Psoas muscle (tissue), 8 donors: ENCODE measurements at regions of chr11 and their contacts with region 1.

Region 1: GRCh38 chr11:44095506-44096394 is at the start of gene EXT2:
- DNase-seq: peak; percentile 89 to 95
- ATAC-seq: peak; percentile 98 to 99 (median 98)
- H3K4me3 ChIP-seq: peak within 1 kb of the TSS; percentile 95
- H3K27ac ChIP-seq: peak within 1 kb of the TSS; percentile 85
- H3K4me1 ChIP-seq: peaks cover 21% of the 10 kb centered on the region
- H3K27me3 ChIP-seq: no peaks in the 10 kb centered on the region
- CTCF ChIP-seq: peak; percentile 88
- total RNA-seq, gene EXT2: 21.4 to 23.5 (median 21.6) TPM

Region 2: GRCh38 chr11:44538375-44539054 is 442.8 kb after region 1 on chr11:
- intact Hi-C with region 1: loop called (anchors 1 to 2 kb)
- DNase-seq: peak; percentile 70 to 87
- ATAC-seq: peak; percentile 95 to 99 (median 96)
- H3K4me3 ChIP-seq: no peak overlapping the region
- H3K27ac ChIP-seq: no peak overlapping the region
- H3K4me1 ChIP-seq: no peaks in the 10 kb centered on the region
- H3K27me3 ChIP-seq: peaks cover 0 to 7% (median 0%) of the 10 kb centered on the region in 3 donors
- CTCF ChIP-seq: peak; percentile 96

Region 3: DNA sequence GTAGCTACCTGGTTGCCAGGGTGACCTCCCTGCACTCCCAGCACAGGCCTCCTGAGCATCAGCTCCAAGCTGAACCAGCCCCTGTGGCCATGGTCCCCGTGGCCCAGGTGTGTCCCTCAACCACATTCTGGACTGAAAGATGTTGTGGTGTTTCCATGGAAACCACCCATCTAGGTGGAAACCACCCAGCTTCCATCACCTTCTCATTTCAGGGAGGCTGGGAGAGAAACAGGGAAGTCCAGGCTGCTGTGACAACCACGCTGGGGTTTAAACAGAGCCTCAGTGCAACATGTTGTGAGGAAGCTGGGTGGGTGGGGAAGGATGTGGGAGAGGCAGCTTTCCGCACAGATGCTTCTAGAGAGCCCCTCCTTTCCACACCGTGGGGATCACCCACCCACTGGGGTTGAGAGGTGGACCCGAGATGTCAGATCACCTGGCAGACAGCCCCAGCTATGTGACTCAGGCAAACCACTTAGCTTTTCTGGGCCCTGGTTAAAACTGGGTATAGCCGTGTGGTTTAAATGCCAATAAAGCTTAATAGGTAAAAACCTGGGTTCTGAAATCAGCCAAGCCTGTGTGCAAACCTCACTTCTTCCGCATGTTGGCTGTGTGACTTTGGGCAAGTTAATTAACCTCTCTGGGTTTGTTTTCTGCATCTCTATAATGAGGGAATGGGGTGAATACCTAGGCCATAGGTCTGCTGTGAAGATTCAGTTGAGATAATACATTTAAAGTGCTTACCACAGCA is 516.1 kb after region 1 on chr11:
- intact Hi-C with region 1: loop called (anchors 10 kb)
- DNase-seq: no peak
- ATAC-seq: no peak
- H3K4me3 ChIP-seq: no peak overlapping the region
- H3K27ac ChIP-seq: no peak overlapping the region
- H3K4me1 ChIP-seq: peaks cover 13% of the 10 kb centered on the region
- H3K27me3 ChIP-seq: no peaks in the 10 kb centered on the region
- CTCF ChIP-seq: no peak